ENCODE measurements at regions of chr6 and their contacts with region 1.

Region 1: GRCh38 chr6:26537846-26538571 is at the start of gene HMGN4:
- DNase-seq: peak; percentile 64 to 97 (median 95)
- ATAC-seq: peak; percentile 79
- H3K4me3 ChIP-seq: peak within 1 kb of the TSS; percentile 76
- H3K4me3 Mint-ChIP-seq: peak within 1 kb of the TSS; percentile 88 to 99 (median 94)
- H3K27ac ChIP-seq: peak within 1 kb of the TSS; percentile 88
- H3K27ac Mint-ChIP-seq: peak within 1 kb of the TSS; percentile 91 to 99 (median 98)
- H3K4me1 ChIP-seq: peaks cover 20 to 23% of the 10 kb centered on the region in 2 donors
- H3K4me1 Mint-ChIP-seq: peaks cover 46 to 72% (median 60%) of the 10 kb centered on the region in 7 donors
- H3K27me3 ChIP-seq: no peaks in the 10 kb centered on the region
- H3K27me3 Mint-ChIP-seq: peaks cover 0 to 5% (median 0%) of the 10 kb centered on the region in 5 donors
- total RNA-seq, gene HMGN4: 37.6 to 96.0 (median 81.7) TPM

Region 2: DNA sequence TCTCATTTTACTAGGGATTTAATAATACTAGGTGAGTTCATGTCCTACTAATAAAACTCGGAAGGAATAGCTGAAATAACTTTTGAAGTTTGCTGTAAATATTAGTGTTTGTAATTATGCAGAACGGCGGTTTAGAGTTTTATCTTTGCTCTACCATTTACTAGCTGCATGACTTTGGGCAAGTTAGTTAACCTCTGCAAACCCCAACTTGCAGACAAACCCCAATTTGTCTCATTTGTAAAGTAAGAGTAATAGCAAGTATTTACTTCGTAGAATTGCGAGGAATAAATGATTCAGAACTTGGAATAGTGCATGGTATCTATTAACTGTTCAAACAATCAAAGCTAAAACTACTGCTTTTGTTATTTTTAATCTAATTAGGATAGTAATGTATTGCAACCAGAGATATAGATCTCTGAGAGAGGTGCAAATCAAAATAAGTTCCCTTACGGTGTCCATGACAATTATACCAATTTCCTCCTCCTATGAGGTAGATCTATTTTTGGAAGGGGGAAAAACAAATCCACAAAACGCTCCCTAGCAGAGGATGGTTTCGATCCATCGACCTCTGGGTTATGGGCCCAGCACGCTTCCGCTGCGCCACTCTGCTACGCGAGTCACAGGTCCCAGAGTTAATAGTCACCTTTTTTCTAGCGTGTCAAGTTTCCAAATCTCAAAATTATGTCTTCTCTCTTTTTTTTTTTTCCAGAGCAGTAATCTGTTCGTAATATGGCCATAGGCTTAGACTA is 208.1 kb before region 1 on chr6:
- CTCF ChIA-PET with region 1: interaction called, 5 read pairs
- POLR2A ChIA-PET with region 1: interaction called, 9 read pairs
- intact Hi-C with region 1: loop called in 1 of 2 experiments (anchors 1 kb)
- DNase-seq: peak; percentile 26 to 76 (median 69)
- ATAC-seq: peak; percentile 41
- H3K4me3 ChIP-seq: no peak overlapping the region
- H3K4me3 Mint-ChIP-seq: peak overlapping the region; percentile 35 to 97 (median 79)
- H3K27ac ChIP-seq: no peak overlapping the region
- H3K27ac Mint-ChIP-seq: peak overlapping the region; percentile 37 to 98 (median 95)
- H3K4me1 ChIP-seq: peaks cover 20 to 21% of the 10 kb centered on the region in 2 donors
- H3K4me1 Mint-ChIP-seq: peaks cover 16 to 62% (median 57%) of the 10 kb centered on the region in 7 donors
- H3K27me3 ChIP-seq: peaks cover 0 to 7% of the 10 kb centered on the region in 2 donors
- H3K27me3 Mint-ChIP-seq: peaks cover 4 to 49% (median 39%) of the 10 kb centered on the region in 5 donors

Region 3: DNA sequence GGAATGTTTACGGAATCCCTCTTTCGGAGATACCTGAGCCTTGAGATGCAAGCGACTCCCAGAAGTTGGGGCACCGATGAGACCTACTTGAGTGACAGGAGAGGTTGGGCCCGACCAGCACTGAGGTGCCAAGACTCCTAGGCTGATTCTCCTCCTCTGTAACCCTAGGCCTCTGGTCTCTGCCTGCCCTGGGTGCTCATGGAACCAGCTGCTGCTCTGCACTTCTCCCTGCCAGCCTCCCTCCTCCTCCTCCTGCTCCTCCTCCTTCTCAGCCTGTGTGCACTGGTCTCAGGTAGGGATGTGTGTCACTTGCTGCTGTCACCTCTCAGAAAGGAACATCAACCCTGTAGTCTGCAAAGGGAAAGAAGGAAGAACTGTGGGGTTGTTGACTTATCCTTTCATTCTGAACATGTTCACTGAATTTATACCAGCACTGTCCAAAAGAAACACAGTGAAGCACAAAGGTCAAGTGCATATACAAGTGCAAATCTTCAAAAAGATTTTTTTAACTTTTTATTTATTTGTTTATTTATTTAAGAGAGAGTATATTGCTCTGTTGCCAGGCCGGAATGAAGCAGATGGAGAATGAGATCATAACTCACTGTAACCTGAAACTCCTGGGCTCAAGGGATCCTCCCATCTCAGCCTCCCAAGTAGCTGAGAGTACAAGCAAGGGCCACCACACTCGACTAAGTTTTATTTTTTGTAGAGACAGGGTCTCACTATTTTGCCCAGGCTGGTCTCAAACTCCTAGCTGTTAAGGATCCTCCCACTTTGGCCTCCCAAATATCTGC is 154.2 kb before region 1 on chr6:
- CTCF ChIA-PET with region 1: no interaction called
- POLR2A ChIA-PET with region 1: no interaction called
- intact Hi-C with region 1: loop called in 1 of 2 experiments (anchors 5 kb)
- DNase-seq: peak in 1 of 9 donors; percentile 20
- ATAC-seq: peak; percentile 9
- H3K4me3 ChIP-seq: peak overlapping the region; percentile 83
- H3K4me3 Mint-ChIP-seq: peak overlapping the region; percentile 91 to 100 (median 98)
- H3K27ac ChIP-seq: peak overlapping the region; percentile 96
- H3K27ac Mint-ChIP-seq: peak overlapping the region; percentile 81 to 99 (median 95)
- H3K4me1 ChIP-seq: peaks cover 8 to 16% of the 10 kb centered on the region in 2 donors
- H3K4me1 Mint-ChIP-seq: peaks cover 17 to 57% (median 33%) of the 10 kb centered on the region in 7 donors
- H3K27me3 ChIP-seq: no peaks in the 10 kb centered on the region
- H3K27me3 Mint-ChIP-seq: no peaks in the 10 kb centered on the region

Region 4: DNA sequence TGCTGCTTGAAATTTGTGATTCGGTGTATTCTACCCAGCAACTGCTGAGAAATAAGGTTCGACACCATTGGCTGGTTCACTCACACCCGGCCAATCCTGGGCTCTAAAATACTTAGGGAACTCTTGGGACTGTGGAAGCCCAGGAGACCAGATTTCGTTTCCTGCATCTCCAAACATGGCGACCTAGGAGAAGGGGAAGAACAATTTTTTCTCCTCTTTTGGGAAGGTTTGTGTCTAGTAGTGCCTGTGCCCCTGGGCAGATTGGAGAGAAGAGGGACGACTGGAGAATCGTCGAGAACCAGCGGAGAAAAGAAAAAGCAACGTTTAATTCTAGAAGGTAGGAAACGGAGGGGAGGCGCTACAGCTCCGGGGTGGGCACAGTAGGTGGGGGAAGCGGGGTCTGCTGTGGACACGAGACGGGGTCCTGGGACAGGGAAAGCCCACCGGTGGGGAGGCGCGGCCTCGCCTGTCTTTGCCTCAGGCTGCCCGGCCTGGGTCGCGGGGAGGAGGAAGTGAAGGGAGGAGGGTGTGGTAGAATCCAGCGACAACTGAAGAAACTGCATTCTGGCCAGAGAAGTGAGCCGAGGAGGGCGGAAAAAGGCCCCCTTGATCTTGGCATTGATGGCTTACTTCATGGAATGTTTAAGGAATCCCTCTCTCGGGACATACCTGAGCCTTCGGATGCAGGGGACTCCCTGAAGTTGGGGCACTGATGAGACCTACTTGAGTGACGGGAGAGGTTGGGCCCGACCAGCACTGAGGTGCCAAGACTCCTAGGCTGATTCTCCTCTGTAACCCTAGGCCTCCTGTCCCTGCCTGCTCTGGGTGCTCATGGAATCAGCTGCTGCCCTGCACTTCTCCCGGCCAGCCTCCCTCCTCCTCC is 80.0 kb before region 1 on chr6 and contains the start of gene BTN2A1:
- CTCF ChIA-PET with region 1: no interaction called
- POLR2A ChIA-PET with region 1: interaction called, 4 read pairs
- intact Hi-C with region 1: loop called in 1 of 2 experiments (anchors 1 kb)
- DNase-seq: peak in 8 of 9 donors; percentile 59 to 86 (median 78)
- ATAC-seq: peak; percentile 99
- H3K4me3 ChIP-seq: peak within 1 kb of the TSS; percentile 93
- H3K4me3 Mint-ChIP-seq: peak within 1 kb of the TSS; percentile 90 to 100 (median 98)
- H3K27ac ChIP-seq: peak within 1 kb of the TSS; percentile 81
- H3K27ac Mint-ChIP-seq: peak within 1 kb of the TSS; percentile 89 to 99 (median 94)
- H3K4me1 ChIP-seq: peaks cover 27 to 38% of the 10 kb centered on the region in 2 donors
- H3K4me1 Mint-ChIP-seq: peaks cover 43 to 75% (median 60%) of the 10 kb centered on the region in 7 donors
- H3K27me3 ChIP-seq: no peaks in the 10 kb centered on the region
- H3K27me3 Mint-ChIP-seq: no peaks in the 10 kb centered on the region
- total RNA-seq, gene BTN2A1: 29.0 to 54.6 (median 37.2) TPM

Region 5: GRCh38 chr6:26568601-26569432 is 30.8 kb after region 1 on chr6:
- CTCF ChIA-PET with region 1: interaction called, 7 read pairs
- POLR2A ChIA-PET with region 1: interaction called, 35 read pairs
- intact Hi-C with region 1: loop called (anchors 1 kb)
- DNase-seq: peak; percentile 96 to 99 (median 98)
- ATAC-seq: peak; percentile 84
- H3K4me3 ChIP-seq: peak overlapping the region; percentile 90
- H3K4me3 Mint-ChIP-seq: peak overlapping the region; percentile 90 to 100 (median 95)
- H3K27ac ChIP-seq: peak overlapping the region; percentile 74
- H3K27ac Mint-ChIP-seq: peak overlapping the region; percentile 96 to 100 (median 99)
- H3K4me1 ChIP-seq: peaks cover 0 to 3% of the 10 kb centered on the region in 2 donors
- H3K4me1 Mint-ChIP-seq: peaks cover 11 to 42% (median 26%) of the 10 kb centered on the region in 7 donors
- H3K27me3 ChIP-seq: no peaks in the 10 kb centered on the region
- H3K27me3 Mint-ChIP-seq: peaks cover 0 to 12% (median 0%) of the 10 kb centered on the region in 5 donors

Measured in naive thymus-derived CD4-positive, alpha-beta T cell (primary cell).